ENCODE measurements at regions of chr9 and their contacts with region 1.

Region 1: GRCh38 chr9:2132484-2133082 is 117.4 kb downstream of the SMARCA2 start:
- DNase-seq: no peak
- H3K4me3 ChIP-seq: no peak overlapping the region
- H3K27ac ChIP-seq: no peak overlapping the region
- H3K4me1 ChIP-seq: no peaks in the 10 kb centered on the region
- H3K27me3 ChIP-seq: no peaks in the 10 kb centered on the region
- CTCF ChIP-seq: peak; percentile 60

Region 2: GRCh38 chr9:2013743-2014475 is 118.7 kb before region 1 on chr9:
- intact Hi-C with region 1: no loop called
- DNase-seq: peak; percentile 24
- H3K4me3 ChIP-seq: peak overlapping the region; percentile 76
- H3K27ac ChIP-seq: peak overlapping the region; percentile 99
- H3K4me1 ChIP-seq: peaks cover 2% of the 10 kb centered on the region
- H3K27me3 ChIP-seq: no peaks in the 10 kb centered on the region
- CTCF ChIP-seq: no peak

Region 3: DNA sequence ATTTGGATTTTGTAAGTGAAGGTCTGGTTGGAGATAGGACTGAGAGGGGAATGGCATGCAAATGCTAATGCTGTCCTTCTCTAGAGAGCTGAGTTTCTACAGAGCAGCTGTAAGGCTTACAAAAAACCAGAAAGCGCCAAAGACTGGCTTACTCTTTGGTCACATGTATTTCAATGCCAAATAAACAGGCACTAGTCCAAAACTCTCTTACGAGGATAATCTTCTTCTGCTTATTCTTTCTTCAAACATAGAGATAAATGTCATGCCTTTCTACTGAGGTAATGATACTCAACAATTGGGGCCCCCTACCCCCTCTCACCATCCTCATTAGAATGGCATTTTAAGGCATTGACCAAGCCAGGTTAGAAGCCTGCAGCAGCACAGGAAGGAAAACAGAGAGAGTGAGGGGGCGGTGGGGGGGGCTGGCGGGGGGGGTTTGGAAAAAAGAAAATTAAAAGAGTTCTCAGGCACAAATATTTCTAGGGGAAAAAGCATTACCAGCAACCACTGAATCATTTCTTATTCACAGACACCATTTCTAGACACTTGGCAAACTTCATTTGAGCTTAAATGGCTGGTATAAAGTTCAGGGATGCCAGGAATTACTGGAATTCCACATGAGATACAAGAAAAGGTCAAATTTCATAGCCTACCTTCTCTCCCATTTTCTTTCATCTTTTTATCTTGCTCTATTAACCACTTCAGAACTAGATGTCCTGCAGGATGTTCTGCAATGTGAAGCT is 677.3 kb after region 1 on chr9:
- intact Hi-C with region 1: loop called (anchors 10 kb)
- DNase-seq: no peak
- H3K4me3 ChIP-seq: no peak overlapping the region
- H3K27ac ChIP-seq: peak overlapping the region; percentile 8
- H3K4me1 ChIP-seq: no peaks in the 10 kb centered on the region
- H3K27me3 ChIP-seq: no peaks in the 10 kb centered on the region
- CTCF ChIP-seq: no peak